Mammary epithelial cell (primary cell): ENCODE measurements at regions of chr1 and their contacts with region 1.

Region 1: GRCh38 chr1:210143465-210144062 is 89.0 kb upstream of the SERTAD4 start:
- DNase-seq: peak; percentile 51
- H3K4me3 ChIP-seq: no peak overlapping the region
- H3K27ac ChIP-seq: no peak overlapping the region
- H3K4me1 ChIP-seq: peaks cover 17% of the 10 kb centered on the region
- H3K27me3 ChIP-seq: no peaks in the 10 kb centered on the region
- CTCF ChIP-seq: peak; percentile 62

Region 2: DNA sequence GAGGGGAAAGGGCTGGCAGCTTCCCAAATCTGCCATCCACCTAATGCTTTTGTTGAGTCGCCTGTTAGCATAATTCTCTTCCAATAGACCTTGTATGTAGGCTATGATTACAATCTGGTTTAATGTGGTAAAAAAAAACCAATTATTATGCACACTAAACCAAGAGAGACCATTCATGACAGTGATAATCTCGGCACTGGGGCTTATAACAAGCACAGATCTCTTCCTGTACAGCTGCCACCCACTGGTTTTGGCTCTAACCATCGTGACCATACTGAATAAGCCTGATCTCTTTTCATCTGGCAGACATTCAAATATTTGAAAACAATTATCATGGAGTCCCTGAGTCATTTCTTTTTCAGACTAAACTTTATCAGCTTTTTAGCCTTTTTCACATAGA is 217.5 kb before region 1 on chr1:
- CTCF ChIA-PET with region 1: no interaction called
- dilution Hi-C with region 1: no loop called
- in situ Hi-C with region 1: no loop called
- intact Hi-C with region 1: no loop called
- DNase-seq: peak; percentile 79
- H3K4me3 ChIP-seq: no peak overlapping the region
- H3K27ac ChIP-seq: no peak overlapping the region
- H3K4me1 ChIP-seq: peaks cover 8% of the 10 kb centered on the region
- H3K27me3 ChIP-seq: no peaks in the 10 kb centered on the region
- CTCF ChIP-seq: no peak

Region 3: DNA sequence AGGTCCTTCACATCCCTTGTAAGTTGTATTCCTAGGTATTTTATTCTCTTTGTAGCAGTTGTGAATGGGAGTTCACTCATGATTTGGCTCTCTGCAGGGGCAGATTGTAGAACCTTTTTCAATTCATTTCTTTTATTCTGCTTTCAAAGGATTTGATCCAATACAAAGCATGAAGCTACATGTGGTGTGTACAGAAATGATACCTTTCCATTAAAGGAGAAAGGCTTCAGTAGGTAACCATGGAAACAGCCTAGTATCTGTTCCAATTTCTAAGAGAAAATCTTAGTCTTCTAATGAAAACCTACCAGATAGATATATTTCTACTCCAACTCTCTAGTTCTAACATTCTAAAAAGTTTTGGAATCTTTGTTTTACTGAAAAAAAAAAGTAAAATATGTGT is 100.5 kb before region 1 on chr1:
- CTCF ChIA-PET with region 1: no interaction called
- dilution Hi-C with region 1: no loop called
- in situ Hi-C with region 1: no loop called
- intact Hi-C with region 1: no loop called
- DNase-seq: no peak
- H3K4me3 ChIP-seq: no peak overlapping the region
- H3K27ac ChIP-seq: no peak overlapping the region
- H3K4me1 ChIP-seq: no peaks in the 10 kb centered on the region
- H3K27me3 ChIP-seq: no peaks in the 10 kb centered on the region
- CTCF ChIP-seq: no peak

Region 4: GRCh38 chr1:210185063-210185462 is 41.5 kb after region 1 on chr1:
- CTCF ChIA-PET with region 1: no interaction called
- dilution Hi-C with region 1: no loop called
- in situ Hi-C with region 1: no loop called
- intact Hi-C with region 1: loop called (anchors 2 kb)
- DNase-seq: no peak
- H3K4me3 ChIP-seq: no peak overlapping the region
- H3K27ac ChIP-seq: no peak overlapping the region
- H3K4me1 ChIP-seq: peaks cover 12% of the 10 kb centered on the region
- H3K27me3 ChIP-seq: no peaks in the 10 kb centered on the region
- CTCF ChIP-seq: no peak

Region 5: GRCh38 chr1:210233216-210234020 is 89.9 kb after region 1 on chr1:
- CTCF ChIA-PET with region 1: no interaction called
- dilution Hi-C with region 1: no loop called
- in situ Hi-C with region 1: no loop called
- intact Hi-C with region 1: loop called (anchors 5 kb)
- DNase-seq: peak; percentile 80
- H3K4me3 ChIP-seq: peak overlapping the region; percentile 60 to 82 (median 78)
- H3K27ac ChIP-seq: peak overlapping the region; percentile 42
- H3K4me1 ChIP-seq: peaks cover 9% of the 10 kb centered on the region
- H3K27me3 ChIP-seq: no peaks in the 10 kb centered on the region
- CTCF ChIP-seq: no peak

Region 6: GRCh38 chr1:210301615-210302000 is 158.0 kb after region 1 on chr1:
- CTCF ChIA-PET with region 1: interaction called, 3 read pairs
- dilution Hi-C with region 1: no loop called
- in situ Hi-C with region 1: loop called in 1 of 2 experiments (anchors 25 kb)
- intact Hi-C with region 1: no loop called
- DNase-seq: no peak
- H3K4me3 ChIP-seq: no peak overlapping the region
- H3K27ac ChIP-seq: no peak overlapping the region
- H3K4me1 ChIP-seq: peaks cover 11% of the 10 kb centered on the region
- H3K27me3 ChIP-seq: no peaks in the 10 kb centered on the region
- CTCF ChIP-seq: no peak

Region 7: DNA sequence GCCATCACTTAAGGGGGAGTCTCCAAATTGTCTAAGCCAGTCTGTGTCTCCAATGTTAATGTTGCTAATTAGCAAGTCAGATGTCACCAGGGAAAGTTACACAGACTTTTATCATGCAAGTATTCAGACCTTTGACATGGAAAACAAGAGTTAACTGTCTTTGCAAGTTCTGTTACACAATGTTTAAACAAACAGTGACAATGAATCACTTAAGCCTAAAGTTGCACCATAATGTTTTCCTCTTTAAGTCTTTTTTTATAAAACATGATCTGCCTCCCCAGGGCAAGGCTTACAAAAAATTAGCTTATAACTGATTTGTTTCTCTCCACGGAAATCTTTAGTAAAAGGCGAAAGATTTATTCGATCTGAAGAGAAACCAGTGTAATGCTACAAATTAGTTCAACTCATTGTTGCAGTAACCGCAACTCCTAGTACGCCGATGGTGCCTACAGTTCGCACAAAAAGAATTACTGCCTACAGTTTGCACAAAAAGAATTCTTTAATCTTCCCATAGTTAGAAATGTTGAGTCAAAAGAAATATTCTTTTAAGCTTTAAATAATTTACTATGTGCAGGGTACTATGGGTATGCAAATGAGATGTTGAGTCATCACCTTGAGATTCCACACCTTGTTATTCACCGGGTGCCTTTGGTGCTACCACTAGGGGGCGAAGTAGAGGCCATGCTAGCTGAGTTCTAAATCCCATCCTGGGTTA is 230.5 kb after region 1 on chr1:
- CTCF ChIA-PET with region 1: no interaction called
- dilution Hi-C with region 1: no loop called
- in situ Hi-C with region 1: no loop called
- intact Hi-C with region 1: loop called (anchors 5 kb)
- DNase-seq: peak; percentile 100
- H3K4me3 ChIP-seq: no peak overlapping the region
- H3K27ac ChIP-seq: peak overlapping the region; percentile 99
- H3K4me1 ChIP-seq: peaks cover 4% of the 10 kb centered on the region
- H3K27me3 ChIP-seq: no peaks in the 10 kb centered on the region
- CTCF ChIP-seq: peak; percentile 97 to 99